Activated T-helper 1 cell treated with anti-CD3 and anti-CD28 coated beads, Interleukin-12 subunit alpha, Interleukin-12 subunit beta, Interleukin-2, Interleukin-4 antibody, amounts not matched to agents 30 ng/mL and 10 ng/mL and 1 ng/mL, durations not matched to agents 14 hours and 24 hours and 36 hours (primary cell): ENCODE measurements at regions of chr16 and their contacts with region 1.

Region 1: GRCh38 chr16:88650749-88651275 is at the start of gene CYBA:
- DNase-seq: peak; percentile 88
- H3K4me3 Mint-ChIP-seq: peak within 1 kb of the TSS; percentile 88
- H3K27ac Mint-ChIP-seq: peak within 1 kb of the TSS; percentile 96
- H3K4me1 Mint-ChIP-seq: peaks cover 13% of the 10 kb centered on the region
- H3K27me3 Mint-ChIP-seq: no peaks in the 10 kb centered on the region
- total RNA-seq, gene CYBA: 218 and 219 TPM in 2 replicates

Region 2: DNA sequence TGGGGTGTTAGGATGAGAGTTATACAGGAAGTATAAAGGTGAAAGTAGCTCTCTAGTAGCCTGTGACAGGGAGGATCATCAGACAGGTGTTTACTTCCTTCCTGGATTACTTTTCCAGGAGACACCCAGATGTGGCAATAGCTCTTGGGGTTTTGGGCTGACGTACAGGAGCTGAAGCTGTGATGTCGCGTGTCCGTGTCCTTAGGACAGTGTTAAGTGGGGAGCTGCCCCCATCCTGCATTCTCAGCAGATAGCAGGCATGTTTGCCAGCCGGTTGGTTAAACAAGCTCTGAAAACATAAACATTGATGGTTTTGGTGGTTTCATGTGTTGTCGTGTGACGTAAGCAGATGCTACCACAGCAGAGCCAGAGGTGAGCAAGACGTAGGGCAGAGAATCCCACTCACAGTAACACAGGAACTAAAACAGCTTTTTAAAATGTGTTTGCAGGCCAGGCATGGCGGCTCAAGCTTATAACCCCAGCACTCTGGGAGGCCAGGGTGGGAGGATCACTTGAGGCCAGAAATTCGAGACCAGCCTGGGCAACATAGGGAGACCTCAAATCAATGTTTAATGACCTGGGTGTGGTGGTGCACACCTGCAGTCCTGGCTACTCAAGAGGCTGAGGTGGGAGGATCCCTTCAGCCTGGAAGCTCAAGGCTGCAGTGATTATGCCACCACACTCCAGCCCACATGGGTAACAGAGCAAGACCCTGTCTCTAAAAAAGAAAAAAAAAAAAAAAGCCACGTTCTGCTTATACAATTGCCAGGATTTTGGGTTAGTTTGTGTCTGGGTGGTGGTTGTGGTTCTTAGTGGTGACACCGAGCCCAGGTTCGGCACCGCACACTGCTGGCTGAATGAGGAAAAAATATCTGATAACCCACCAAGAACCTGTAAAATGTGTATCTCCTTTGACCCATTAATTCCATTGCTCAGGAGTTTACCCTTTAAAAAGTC is 30.7 kb before region 1 on chr16:
- intact Hi-C with region 1: no loop called
- DNase-seq: peak; percentile 47
- H3K4me3 Mint-ChIP-seq: peak overlapping the region; percentile 9
- H3K27ac Mint-ChIP-seq: peak overlapping the region; percentile 81
- H3K4me1 Mint-ChIP-seq: peaks cover 33% of the 10 kb centered on the region
- H3K27me3 Mint-ChIP-seq: no peaks in the 10 kb centered on the region

Region 3: GRCh38 chr16:88633684-88634140 is 17.1 kb before region 1 on chr16:
- intact Hi-C with region 1: loop called (anchors 1 kb)
- DNase-seq: peak; percentile 17
- H3K4me3 Mint-ChIP-seq: peak overlapping the region; percentile 64
- H3K27ac Mint-ChIP-seq: no peak overlapping the region
- H3K4me1 Mint-ChIP-seq: peaks cover 21% of the 10 kb centered on the region
- H3K27me3 Mint-ChIP-seq: peaks cover 17% of the 10 kb centered on the region

Region 4: DNA sequence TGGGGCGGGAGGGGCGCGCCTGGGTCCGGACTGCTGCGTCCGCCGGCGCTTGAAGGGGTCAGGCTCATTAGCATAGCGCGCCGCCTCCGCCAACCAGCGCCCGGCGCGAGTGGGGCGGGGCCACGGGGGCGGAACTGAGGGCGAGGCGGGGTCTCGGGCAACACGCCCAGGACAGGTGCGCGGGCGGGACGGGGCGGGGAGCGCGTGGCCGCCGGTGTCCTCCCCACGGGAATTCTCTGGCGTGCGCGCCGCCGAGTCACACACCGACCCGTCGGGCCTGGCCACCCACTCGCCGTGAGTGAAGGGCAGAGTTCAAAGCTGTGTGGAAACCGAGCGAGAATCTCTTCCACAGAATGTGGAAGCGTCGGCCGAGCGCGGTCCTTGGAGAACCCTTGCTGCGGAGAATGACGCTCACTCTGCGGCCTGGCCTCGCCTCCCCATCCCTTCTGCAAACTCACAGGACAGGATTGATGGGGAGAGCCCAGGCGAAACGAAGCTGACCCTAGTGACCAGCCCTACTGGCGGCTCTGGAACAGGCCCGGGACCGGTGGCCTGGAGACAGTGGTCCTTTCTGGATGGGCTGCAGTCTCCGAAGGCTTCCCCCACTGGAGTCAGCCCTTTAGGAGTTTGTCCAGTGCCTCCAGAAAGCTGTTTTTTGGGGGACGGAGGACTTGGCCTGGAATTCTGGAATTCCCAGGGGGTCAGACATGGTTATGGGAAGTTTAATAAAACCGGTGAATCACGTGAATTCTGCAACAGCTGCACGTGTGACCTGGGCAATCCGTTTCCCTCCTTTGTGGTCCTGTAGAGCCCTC is 35.8 kb after region 1 on chr16 and contains the start of gene SNAI3:
- intact Hi-C with region 1: loop called (anchors 1 kb)
- DNase-seq: peak; percentile 87
- H3K4me3 Mint-ChIP-seq: peak within 1 kb of the TSS; percentile 80
- H3K27ac Mint-ChIP-seq: no peak within 1 kb of the TSS
- H3K4me1 Mint-ChIP-seq: peaks cover 46% of the 10 kb centered on the region
- H3K27me3 Mint-ChIP-seq: peaks cover 3% of the 10 kb centered on the region
- total RNA-seq, gene SNAI3: 1.8 and 2.4 TPM in 2 replicates

Region 5: GRCh38 chr16:88706288-88706964 is 55.6 kb after region 1 on chr16 and contains the starts of genes CTU2 and RNF166:
- intact Hi-C with region 1: loop called (anchors 1 kb)
- DNase-seq: peak; percentile 92
- H3K4me3 Mint-ChIP-seq: peak within 1 kb of the TSS; percentile 89
- H3K27ac Mint-ChIP-seq: peak within 1 kb of the TSS; percentile 86
- H3K4me1 Mint-ChIP-seq: peaks cover 47% of the 10 kb centered on the region
- H3K27me3 Mint-ChIP-seq: no peaks in the 10 kb centered on the region
- total RNA-seq, gene CTU2: 66.3 and 74.7 TPM in 2 replicates
- total RNA-seq, gene RNF166: 42.4 and 45.0 TPM in 2 replicates